CD14-positive monocyte (primary cell): ENCODE measurements at regions of chr11 and their contacts with region 1.

Region 1: GRCh38 chr11:13955971-13956421 is 6.5 kb upstream of the SPON1 start:
- DNase-seq: peak; percentile 40 to 67 (median 55)
- H3K4me3 ChIP-seq: no peak overlapping the region
- H3K4me3 Mint-ChIP-seq: no peak overlapping the region
- H3K27ac ChIP-seq: no peak overlapping the region
- H3K27ac Mint-ChIP-seq: no peak overlapping the region
- H3K4me1 ChIP-seq: no peaks in the 10 kb centered on the region
- H3K4me1 Mint-ChIP-seq: no peaks in the 10 kb centered on the region
- H3K27me3 ChIP-seq: peaks cover 21 to 32% of the 10 kb centered on the region in 2 donors
- H3K27me3 Mint-ChIP-seq: peaks cover 15 to 27% (median 21%) of the 10 kb centered on the region in 3 donors
- CTCF ChIP-seq: peak; percentile 83

Region 2: DNA sequence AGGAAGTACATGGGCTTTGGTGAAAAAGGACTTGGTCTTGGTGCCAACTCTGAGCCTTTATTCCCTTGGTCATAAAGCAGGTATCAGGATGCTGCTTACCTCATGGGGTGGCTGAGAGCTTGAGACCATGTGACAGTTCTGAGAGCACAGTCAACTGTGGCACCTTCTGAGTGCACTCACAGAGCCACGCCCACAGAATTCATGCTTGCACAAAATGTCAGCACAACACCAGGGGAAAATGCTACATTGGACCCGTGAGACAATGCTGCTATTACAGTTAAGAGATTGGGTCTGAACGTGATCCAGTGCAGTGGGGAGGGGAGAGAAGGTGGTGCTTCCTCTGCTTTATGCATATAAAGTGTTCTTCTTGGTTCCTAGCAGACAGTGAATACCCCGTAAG is 73.0 kb before region 1 on chr11:
- intact Hi-C with region 1: no loop called
- DNase-seq: no peak
- H3K4me3 ChIP-seq: no peak overlapping the region
- H3K4me3 Mint-ChIP-seq: no peak overlapping the region
- H3K27ac ChIP-seq: no peak overlapping the region
- H3K27ac Mint-ChIP-seq: peak overlapping the region in 1 of 7 donors; percentile 11
- H3K4me1 ChIP-seq: no peaks in the 10 kb centered on the region
- H3K4me1 Mint-ChIP-seq: no peaks in the 10 kb centered on the region
- H3K27me3 ChIP-seq: no peaks in the 10 kb centered on the region
- H3K27me3 Mint-ChIP-seq: peaks cover 0 to 2% (median 0%) of the 10 kb centered on the region in 3 donors
- CTCF ChIP-seq: no peak

Region 3: GRCh38 chr11:14132312-14132711 is 176.3 kb after region 1 on chr11:
- intact Hi-C with region 1: no loop called
- DNase-seq: no peak
- H3K4me3 ChIP-seq: no peak overlapping the region
- H3K4me3 Mint-ChIP-seq: no peak overlapping the region
- H3K27ac ChIP-seq: no peak overlapping the region
- H3K27ac Mint-ChIP-seq: no peak overlapping the region
- H3K4me1 ChIP-seq: no peaks in the 10 kb centered on the region
- H3K4me1 Mint-ChIP-seq: no peaks in the 10 kb centered on the region
- H3K27me3 ChIP-seq: no peaks in the 10 kb centered on the region
- H3K27me3 Mint-ChIP-seq: peaks cover 0 to 4% (median 0%) of the 10 kb centered on the region in 3 donors
- CTCF ChIP-seq: no peak

Region 4: DNA sequence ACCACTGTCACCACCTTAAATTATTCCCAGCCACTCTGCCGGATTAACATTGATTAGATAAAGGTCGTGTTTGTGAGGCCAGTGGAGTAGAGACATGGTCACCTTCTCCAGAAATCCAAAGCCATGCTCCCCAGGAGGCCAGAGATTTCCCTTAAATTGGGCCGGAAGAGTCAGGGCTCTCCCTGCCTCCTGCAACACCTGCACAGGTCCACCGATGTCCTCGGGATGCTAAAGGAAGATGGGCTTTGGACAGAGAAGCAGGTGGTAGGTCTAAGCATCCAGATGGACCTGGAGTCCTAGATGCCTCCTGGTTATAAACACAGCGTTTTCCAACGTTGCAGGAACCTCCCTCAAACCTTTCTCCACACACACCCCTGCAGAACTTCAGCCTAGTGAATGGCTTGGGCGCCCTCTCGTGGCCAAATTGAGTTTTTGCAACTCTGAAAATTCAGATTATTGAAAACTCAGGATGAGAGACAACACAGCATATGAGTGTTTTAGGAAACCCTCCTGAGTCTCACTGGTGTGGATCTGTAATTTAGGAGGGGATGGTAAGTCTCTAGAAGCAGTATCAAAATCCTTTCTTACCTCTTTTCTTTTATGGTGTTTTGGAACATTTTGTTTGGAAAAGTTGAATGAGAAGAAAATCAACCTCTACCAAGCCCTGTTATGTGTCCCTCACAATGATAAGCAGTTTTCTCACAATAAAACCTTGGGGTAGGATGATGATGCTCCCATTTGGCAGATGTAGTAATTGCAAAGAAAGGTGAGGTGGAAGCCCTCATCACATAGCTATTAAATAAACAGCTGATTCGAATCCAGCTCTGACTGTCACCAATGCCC is 293.3 kb after region 1 on chr11:
- intact Hi-C with region 1: loop called (anchors 1 to 2 kb)
- DNase-seq: peak; percentile 15 to 46 (median 45)
- H3K4me3 ChIP-seq: no peak overlapping the region
- H3K4me3 Mint-ChIP-seq: peak overlapping the region in 1 of 2 donors; percentile 24
- H3K27ac ChIP-seq: no peak overlapping the region
- H3K27ac Mint-ChIP-seq: no peak overlapping the region
- H3K4me1 ChIP-seq: no peaks in the 10 kb centered on the region
- H3K4me1 Mint-ChIP-seq: no peaks in the 10 kb centered on the region
- H3K27me3 ChIP-seq: peaks cover 2 to 15% of the 10 kb centered on the region in 2 donors
- H3K27me3 Mint-ChIP-seq: peaks cover 13 to 22% (median 18%) of the 10 kb centered on the region in 3 donors
- CTCF ChIP-seq: peak; percentile 89